Common myeloid progenitor, CD34-positive (primary cell): ENCODE measurements at regions of chr16 and their contacts with region 1.

Region 1: DNA sequence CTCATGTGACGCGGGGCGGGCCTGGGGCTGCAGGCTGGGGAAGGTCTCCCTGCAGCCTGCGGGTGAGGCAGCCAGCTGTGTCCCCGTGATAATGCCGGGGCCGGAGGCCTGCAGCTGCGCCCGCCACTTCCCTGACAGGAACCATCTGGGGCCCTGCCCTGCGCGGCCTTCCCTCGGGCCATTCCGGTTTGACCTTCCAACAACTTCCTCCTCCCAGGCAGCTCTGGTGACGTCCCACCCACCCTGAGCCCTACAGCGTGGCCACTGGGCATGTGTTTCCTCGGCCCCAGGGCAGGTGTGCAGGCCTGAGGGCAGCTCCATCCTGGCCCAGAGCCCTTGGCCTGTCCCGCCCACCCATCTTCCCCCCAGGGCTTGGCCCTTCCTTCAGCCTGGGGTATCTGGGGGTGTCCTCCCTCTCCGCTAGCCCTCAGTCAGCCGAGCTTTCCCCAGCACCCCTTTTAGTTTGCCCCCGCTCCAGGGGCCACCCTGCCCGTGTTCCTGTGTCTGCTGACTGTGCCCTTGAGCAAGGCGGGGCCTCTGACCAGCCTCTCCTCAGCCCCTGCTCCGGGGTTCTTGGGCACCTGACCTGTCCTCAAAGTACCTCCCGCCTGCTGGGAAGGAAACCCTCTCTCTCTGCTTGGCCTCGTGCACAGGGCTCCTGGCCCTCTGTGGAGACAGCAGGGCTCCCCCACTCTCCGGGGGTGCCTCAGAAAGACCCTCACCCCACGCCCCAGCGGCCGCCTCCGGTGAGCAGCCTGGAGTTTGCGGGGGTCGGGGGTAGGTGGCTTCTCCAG is at the start of gene CBFA2T3:
- DNase-seq: peak; percentile 85 to 97 (median 96)
- H3K4me3 ChIP-seq: peak within 1 kb of the TSS; percentile 76 to 96 (median 92)
- H3K27ac ChIP-seq: peak within 1 kb of the TSS; percentile 79 to 87
- H3K4me1 ChIP-seq: peaks cover 5 to 79% (median 73%) of the 10 kb centered on the region in 4 experiments
- H3K27me3 ChIP-seq: no peaks in the 10 kb centered on the region

Region 2: DNA sequence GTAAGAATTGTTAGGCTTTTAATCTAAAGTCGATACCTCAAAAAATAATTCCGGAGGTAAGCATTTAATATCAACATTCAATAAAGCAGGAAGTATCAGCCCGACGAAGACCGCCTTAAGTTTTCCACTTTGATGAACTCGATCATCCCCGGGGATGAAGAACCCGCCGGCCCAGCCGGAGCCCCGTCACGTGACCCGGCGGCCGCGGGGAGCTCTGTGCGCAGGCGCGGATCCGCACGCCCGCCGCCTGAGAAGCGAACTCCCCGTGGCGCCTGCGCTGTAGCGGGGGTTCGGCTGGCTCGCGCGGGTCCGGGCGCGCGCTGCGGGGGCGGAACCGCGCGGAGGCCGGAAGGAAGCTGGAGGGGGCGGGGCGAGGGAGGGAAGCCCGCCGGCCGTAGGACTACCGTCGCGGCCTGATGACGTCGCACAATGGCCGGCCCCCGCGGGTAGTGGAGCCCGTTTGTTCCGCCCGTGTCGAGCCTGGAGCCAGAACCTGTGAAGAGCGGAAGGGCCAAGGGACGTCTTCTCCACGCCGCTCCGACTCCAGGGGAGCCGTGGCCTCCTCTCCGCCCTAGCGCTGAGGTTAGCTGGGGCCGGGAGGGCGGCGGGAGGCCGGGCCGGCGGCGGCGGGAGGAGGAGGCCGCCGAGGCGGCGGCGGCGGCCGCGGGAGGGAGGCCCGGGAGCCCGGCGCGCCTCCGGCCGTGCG is 407.1 kb before region 1 on chr16 and contains the start of gene ZC3H18:
- CTCF ChIA-PET with region 1: no interaction called
- POLR2A ChIA-PET with region 1: no interaction called
- DNase-seq: peak; percentile 95 to 98 (median 96)
- H3K4me3 ChIP-seq: peak within 1 kb of the TSS; percentile 75 to 92 (median 90)
- H3K27ac ChIP-seq: peak within 1 kb of the TSS; percentile 13 to 82
- H3K4me1 ChIP-seq: peaks cover 10 to 24% (median 19%) of the 10 kb centered on the region in 4 experiments
- H3K27me3 ChIP-seq: no peaks in the 10 kb centered on the region

Region 3: DNA sequence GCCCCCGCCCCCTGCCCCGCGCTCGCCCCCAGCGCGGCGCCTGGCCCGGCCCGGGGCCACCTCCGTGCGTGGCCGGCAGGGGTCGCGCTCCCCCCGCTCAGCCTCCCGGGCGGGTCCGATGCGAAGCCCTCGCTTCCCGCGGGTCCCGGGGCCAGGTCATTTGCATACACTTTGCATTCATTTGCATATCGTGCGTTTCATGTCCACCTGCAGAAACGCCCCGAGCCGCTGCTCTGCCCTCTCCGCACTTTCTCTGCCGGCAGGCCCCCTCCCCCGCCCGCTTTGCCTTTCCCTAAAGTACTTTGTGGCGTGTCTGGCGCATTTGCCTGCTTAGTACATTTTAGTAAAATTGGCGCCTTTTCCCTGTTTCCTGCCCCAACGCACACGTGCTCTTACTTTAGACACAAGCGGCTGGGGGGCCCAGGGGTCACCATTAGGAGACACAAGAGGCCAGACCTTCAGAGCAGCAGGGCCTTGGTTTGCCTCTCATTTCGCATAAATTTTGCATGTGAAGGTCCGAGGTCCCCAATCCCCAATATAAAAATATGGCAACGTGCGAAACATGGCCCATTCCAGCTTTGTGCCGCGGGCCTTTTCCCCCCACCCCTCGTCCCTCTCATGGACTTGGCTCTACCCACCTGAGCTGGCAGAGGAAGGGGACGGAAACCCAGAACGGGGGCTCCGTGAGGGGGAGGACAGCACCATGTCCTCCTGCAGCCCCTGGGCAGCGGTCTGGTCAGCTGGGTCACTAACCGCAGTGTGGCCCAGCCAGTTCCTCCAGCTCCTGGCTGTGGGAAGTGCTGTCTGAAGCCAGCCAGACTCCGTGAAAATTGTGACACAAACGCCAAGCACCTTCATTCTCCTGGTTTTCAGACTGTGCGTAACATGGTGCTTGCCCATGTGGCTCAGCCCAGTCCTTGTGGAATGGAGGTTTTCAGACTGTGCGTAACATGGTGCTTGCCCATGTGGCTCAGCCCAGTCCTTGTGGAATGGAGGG is 35.0 kb before region 1 on chr16:
- CTCF ChIA-PET with region 1: interaction called, 6 read pairs
- POLR2A ChIA-PET with region 1: interaction called, 15 read pairs
- DNase-seq: peak; percentile 65 to 81 (median 79)
- H3K4me3 ChIP-seq: peak overlapping the region in 6 of 7 experiments; percentile 23 to 74 (median 47)
- H3K27ac ChIP-seq: no peak overlapping the region
- H3K4me1 ChIP-seq: peaks cover 3 to 70% (median 64%) of the 10 kb centered on the region in 4 experiments
- H3K27me3 ChIP-seq: no peaks in the 10 kb centered on the region

Region 4: GRCh38 chr16:88988980-88989811 is 12.0 kb after region 1 on chr16:
- CTCF ChIA-PET with region 1: interaction called, 22 read pairs
- POLR2A ChIA-PET with region 1: interaction called, 7 read pairs
- DNase-seq: no peak
- H3K4me3 ChIP-seq: no peak overlapping the region
- H3K27ac ChIP-seq: no peak overlapping the region
- H3K4me1 ChIP-seq: peaks cover 0 to 35% (median 27%) of the 10 kb centered on the region in 4 experiments
- H3K27me3 ChIP-seq: no peaks in the 10 kb centered on the region

Region 5: GRCh38 chr16:89004209-89004831 is 27.1 kb after region 1 on chr16:
- CTCF ChIA-PET with region 1: interaction called, 10 read pairs
- POLR2A ChIA-PET with region 1: interaction called, 72 read pairs
- DNase-seq: peak; percentile 97 to 99 (median 98)
- H3K4me3 ChIP-seq: peak overlapping the region in 3 of 7 experiments; percentile 36 to 61 (median 53)
- H3K27ac ChIP-seq: peak overlapping the region; percentile 33 to 75
- H3K4me1 ChIP-seq: peaks cover 0 to 34% (median 23%) of the 10 kb centered on the region in 4 experiments
- H3K27me3 ChIP-seq: no peaks in the 10 kb centered on the region

Region 6: DNA sequence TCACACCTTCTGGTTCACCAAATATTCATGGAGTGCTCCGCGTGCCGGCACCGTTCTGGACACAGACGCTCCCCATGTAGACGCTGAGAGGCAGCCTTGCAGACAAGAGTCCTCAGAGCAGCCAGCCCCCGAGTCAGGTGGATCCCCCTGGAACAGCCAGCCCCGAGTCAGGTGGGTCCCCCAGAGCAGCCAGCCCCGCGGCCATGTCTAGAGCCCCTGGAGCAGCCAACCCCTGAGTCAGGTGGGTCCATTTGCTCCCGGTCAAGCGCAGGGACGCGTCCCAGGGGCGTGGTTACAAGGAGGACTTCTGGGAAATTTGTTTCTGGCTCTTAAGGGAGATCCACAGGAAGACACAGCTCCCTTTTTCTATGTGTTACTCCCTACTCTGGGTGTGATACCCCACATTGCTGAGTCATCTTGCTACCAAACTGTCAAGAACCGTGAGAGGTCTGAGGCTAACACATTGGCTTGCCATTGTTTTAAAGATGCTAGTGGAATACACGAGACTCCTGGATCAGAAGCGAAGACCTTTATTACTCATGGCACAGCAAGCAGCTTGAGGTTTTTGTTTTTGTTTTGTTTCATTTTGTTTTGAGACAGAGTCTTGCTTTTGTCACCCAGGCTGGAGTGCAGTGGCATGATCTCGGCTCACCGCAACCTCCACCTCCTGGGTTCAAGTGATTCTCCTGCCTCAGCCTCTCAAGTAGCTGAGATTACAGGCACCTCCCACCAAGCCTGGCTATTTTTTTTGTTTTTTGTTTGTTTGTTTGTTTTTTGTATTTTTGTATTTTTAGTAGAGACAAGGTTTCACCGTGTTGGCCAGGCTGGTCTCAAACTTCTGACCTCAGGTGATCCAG is 43.1 kb after region 1 on chr16:
- CTCF ChIA-PET with region 1: no interaction called
- POLR2A ChIA-PET with region 1: no interaction called
- DNase-seq: peak in 2 of 3 donors; percentile 62 to 72
- H3K4me3 ChIP-seq: no peak overlapping the region
- H3K27ac ChIP-seq: no peak overlapping the region
- H3K4me1 ChIP-seq: peaks cover 0 to 9% (median 1%) of the 10 kb centered on the region in 4 experiments
- H3K27me3 ChIP-seq: no peaks in the 10 kb centered on the region